ENCODE measurements at regions of chr13 and their contacts with region 1.

Region 1: GRCh38 chr13:44050450-44051063 is 170.9 kb downstream of the LACC1 start:
- DNase-seq: peak; percentile 32
- ATAC-seq: peak; percentile 54; the same call in 1 of the 2 replicates
- H3K4me3 ChIP-seq: no peak overlapping the region
- H3K27ac ChIP-seq: no peak overlapping the region
- H3K4me1 ChIP-seq: no peaks in the 10 kb centered on the region
- H3K27me3 ChIP-seq: no peaks in the 10 kb centered on the region
- CTCF ChIP-seq: peak; percentile 51 to 69 (median 67); a peak in 5 of 6 replicates
- POLR2A ChIP-seq: no peak
- RAD21 ChIP-seq: peak; percentile 78

Region 2: GRCh38 chr13:44141725-44142539 is 91.4 kb after region 1 on chr13:
- CTCF ChIA-PET with region 1: no interaction called
- POLR2A ChIA-PET with region 1: no interaction called
- RAD21 ChIA-PET with region 1: no interaction called
- intact Hi-C with region 1: loop called (anchors 5 kb)
- DNase-seq: peak; percentile 85
- ATAC-seq: peak; percentile 98
- H3K4me3 ChIP-seq: peak overlapping the region; percentile 66 to 72
- H3K27ac ChIP-seq: peak overlapping the region; percentile 89
- H3K4me1 ChIP-seq: peaks cover 18 to 33% of the 10 kb centered on the region in 2 experiments
- H3K27me3 ChIP-seq: no peaks in the 10 kb centered on the region
- CTCF ChIP-seq: no peak
- POLR2A ChIP-seq: peak; percentile 81
- RAD21 ChIP-seq: no peak; the same call in 1 of the 2 replicates

Region 3: GRCh38 chr13:44470638-44471562 is 420.3 kb after region 1 on chr13:
- CTCF ChIA-PET with region 1: no interaction called
- POLR2A ChIA-PET with region 1: no interaction called
- RAD21 ChIA-PET with region 1: no interaction called
- intact Hi-C with region 1: loop called (anchors 1 kb)
- DNase-seq: peak; percentile 35
- ATAC-seq: no peak
- H3K4me3 ChIP-seq: no peak overlapping the region
- H3K27ac ChIP-seq: no peak overlapping the region
- H3K4me1 ChIP-seq: peaks cover 13 to 30% of the 10 kb centered on the region in 2 experiments
- H3K27me3 ChIP-seq: no peaks in the 10 kb centered on the region
- CTCF ChIP-seq: peak; percentile 35 to 63 (median 50); a peak in 4 of 6 replicates
- POLR2A ChIP-seq: no peak
- RAD21 ChIP-seq: peak; percentile 78